Ovary (tissue), 10 donors: ENCODE measurements at regions of chr7 and their contacts with region 1.

Region 1: GRCh38 chr7:27224983-27225934 is 17.3 kb upstream of the EVX1 start:
- DNase-seq: no peak
- H3K4me3 ChIP-seq: no peak overlapping the region
- H3K27ac ChIP-seq: no peak overlapping the region
- H3K4me1 ChIP-seq: no peaks in the 10 kb centered on the region
- H3K27me3 ChIP-seq: no peaks in the 10 kb centered on the region
- CTCF ChIP-seq: no peak
- EP300 ChIP-seq: no peak
- POLR2A ChIP-seq: no peak

Region 2: DNA sequence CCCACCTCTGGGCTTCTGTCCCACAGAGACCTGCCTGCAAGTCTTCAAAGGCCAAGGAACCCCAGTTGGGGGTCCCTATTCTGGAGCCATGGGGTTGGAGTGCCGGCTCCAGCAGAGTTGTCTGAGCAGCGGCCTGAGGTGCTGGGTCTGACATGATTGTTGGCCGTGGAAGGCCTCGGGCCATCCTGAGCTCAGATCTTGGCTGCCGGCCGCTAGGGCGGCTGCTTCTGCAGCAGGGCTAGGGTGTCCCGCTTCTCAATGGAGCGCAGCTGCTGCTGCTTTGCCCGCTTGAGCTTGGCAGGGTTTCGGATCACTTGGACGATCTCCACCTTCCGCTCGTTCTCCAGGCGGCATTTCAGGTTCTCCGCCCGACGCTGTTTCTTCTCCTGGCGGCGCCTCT is 266.2 kb after region 1 on chr7:
- intact Hi-C with region 1: loop called in 1 of 4 experiments (anchors 5 kb)
- DNase-seq: no peak
- H3K4me3 ChIP-seq: no peak overlapping the region
- H3K27ac ChIP-seq: no peak overlapping the region
- H3K4me1 ChIP-seq: no peaks in the 10 kb centered on the region
- H3K27me3 ChIP-seq: no peaks in the 10 kb centered on the region
- CTCF ChIP-seq: no peak
- EP300 ChIP-seq: no peak
- POLR2A ChIP-seq: no peak

Region 3: GRCh38 chr7:28551331-28551730 is 1326.1 kb after region 1 on chr7:
- intact Hi-C with region 1: no loop called
- DNase-seq: no peak
- H3K4me3 ChIP-seq: no peak overlapping the region
- H3K27ac ChIP-seq: no peak overlapping the region
- H3K4me1 ChIP-seq: no peaks in the 10 kb centered on the region
- H3K27me3 ChIP-seq: no peaks in the 10 kb centered on the region
- CTCF ChIP-seq: no peak
- EP300 ChIP-seq: no peak
- POLR2A ChIP-seq: no peak